Activated CD4-positive, alpha-beta T cell treated with anti-CD3 and anti-CD28 coated beads for 36 hours (primary cell): ENCODE measurements at regions of chr10 and their contacts with region 1.

Region 1: DNA sequence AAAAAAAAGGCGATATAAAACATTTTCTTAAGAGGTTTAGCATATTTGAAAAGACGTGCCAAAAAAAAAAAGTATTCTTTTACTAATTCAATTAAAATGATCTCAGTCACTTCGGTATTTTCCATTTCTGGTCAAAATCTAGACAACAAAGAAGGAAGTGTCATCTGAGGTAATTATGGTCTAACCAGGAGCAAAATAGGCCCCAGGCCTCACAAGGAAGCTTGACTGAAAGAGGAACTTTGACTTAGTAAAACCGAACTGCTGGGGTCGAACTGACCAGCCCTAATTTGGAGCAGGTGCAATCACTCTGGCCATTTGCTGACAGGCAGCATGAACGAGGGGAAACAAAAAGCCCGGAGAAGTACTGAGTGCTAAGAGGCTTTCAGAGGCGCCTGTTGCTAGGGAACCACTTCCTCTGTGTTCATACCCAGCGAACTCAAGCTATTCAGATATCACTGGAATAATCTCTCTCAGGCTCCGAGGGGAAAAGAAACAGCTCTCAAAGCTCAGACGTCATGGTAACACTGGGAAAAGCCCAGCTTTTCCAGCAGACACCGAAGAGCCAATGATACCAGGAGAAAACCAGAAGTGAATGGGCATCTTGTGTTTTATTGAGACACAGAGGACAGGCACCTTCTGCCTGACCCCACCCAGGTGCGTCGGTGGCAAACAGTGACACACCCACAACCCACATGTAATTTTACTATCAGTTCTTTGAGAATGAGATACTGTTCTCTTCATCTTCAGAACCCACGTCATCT is 126.5 kb downstream of the FAM107B start:
- DNase-seq: peak; percentile 79
- ATAC-seq: peak; percentile 66
- H3K4me3 Mint-ChIP-seq: peak overlapping the region; percentile 65
- H3K27ac Mint-ChIP-seq: peak overlapping the region; percentile 98
- H3K4me1 Mint-ChIP-seq: peaks cover 85% of the 10 kb centered on the region
- H3K27me3 Mint-ChIP-seq: no peaks in the 10 kb centered on the region

Region 2: GRCh38 chr10:14486777-14487487 is 161.3 kb before region 1 on chr10:
- CTCF ChIA-PET with region 1: no interaction called
- POLR2A ChIA-PET with region 1: no interaction called
- intact Hi-C with region 1: no loop called
- DNase-seq: no peak
- ATAC-seq: no peak
- H3K4me3 Mint-ChIP-seq: no peak overlapping the region
- H3K27ac Mint-ChIP-seq: no peak overlapping the region
- H3K4me1 Mint-ChIP-seq: peaks cover 2% of the 10 kb centered on the region
- H3K27me3 Mint-ChIP-seq: peaks cover 19% of the 10 kb centered on the region

Region 3: DNA sequence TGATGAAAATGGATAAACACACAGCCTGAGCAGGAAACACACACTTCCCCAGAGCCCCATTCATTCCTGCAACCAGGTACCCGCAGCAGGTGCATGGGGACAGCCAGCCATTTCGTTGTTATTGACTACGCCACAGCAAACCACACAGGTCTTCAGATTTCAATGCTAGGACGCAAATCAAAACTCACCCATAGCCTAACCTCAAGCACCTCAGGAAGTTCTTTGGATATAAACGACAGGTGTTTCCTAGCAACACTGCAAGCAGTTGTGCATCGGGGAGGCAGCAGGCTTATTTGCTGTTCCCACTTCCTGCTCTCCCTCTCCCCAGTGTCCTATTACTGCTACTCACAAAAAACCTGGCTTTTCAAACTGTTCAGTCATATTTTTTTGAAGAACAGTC is 141.0 kb before region 1 on chr10:
- CTCF ChIA-PET with region 1: no interaction called
- POLR2A ChIA-PET with region 1: no interaction called
- intact Hi-C with region 1: loop called in 1 of 2 experiments (anchors 5 kb)
- DNase-seq: peak; percentile 58
- ATAC-seq: peak; percentile 50
- H3K4me3 Mint-ChIP-seq: peak overlapping the region; percentile 30
- H3K27ac Mint-ChIP-seq: peak overlapping the region; percentile 72
- H3K4me1 Mint-ChIP-seq: peaks cover 43% of the 10 kb centered on the region
- H3K27me3 Mint-ChIP-seq: no peaks in the 10 kb centered on the region

Region 4: DNA sequence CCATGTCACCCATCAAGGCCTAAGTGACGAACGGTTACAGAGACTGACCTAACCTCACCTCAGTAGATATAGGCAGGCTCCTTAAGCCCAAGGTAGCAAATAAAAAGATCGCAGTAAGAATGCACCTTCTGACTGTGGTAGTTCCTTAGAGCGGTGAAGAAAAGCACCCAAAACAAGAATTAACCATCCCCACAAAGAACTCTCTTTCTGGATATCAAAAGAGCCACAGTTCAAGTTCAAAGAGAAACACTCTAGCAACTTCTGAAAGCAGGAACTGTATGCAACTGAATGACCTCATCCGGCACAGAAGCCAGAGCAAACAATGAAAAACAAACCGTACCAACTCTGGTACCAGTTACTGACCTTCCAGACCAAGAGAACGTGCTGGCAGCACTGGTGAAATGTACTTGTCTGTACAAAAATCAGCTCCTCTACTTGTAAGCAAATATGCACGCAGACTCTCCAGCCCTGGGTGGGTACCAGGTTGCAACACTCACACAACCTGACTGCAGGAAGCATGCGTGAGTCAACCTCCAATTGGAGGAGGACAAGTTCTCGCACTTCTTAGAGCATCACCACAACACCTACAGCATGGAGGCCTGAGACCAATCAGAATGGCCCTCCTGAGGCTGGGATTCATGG is 76.2 kb before region 1 on chr10:
- CTCF ChIA-PET with region 1: interaction called, 6 read pairs
- POLR2A ChIA-PET with region 1: interaction called, 10 read pairs
- intact Hi-C with region 1: no loop called
- DNase-seq: peak; percentile 78
- ATAC-seq: peak; percentile 88
- H3K4me3 Mint-ChIP-seq: peak overlapping the region; percentile 66
- H3K27ac Mint-ChIP-seq: peak overlapping the region; percentile 93
- H3K4me1 Mint-ChIP-seq: peaks cover 93% of the 10 kb centered on the region
- H3K27me3 Mint-ChIP-seq: no peaks in the 10 kb centered on the region

Region 5: DNA sequence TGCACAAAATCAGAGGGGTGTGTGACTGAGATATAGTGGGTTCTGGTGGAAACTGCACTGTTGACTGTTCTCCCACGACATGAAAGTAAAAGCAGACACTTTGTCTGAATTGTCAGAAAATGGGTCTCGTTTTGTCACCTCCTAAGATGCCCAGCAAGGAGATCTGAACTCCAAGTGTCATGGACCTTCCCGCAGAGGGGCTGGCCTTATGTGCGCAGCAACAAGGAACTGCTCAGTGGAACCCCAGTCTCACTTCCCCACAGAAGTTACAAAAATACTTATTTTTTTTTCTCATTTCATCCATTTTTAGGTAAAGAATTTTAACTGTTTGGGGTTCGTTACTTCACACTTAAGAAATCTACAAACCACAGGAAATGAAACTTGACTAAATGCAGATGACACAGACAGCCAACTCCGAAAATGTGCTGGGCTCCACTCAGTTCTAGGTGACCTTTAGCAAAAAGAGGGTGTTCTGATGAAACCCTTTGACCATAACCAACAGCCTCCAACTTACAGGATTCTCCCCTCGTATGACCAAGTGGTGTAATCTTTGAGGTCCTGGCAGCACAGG is 11.5 kb after region 1 on chr10:
- CTCF ChIA-PET with region 1: interaction called, 4 read pairs
- POLR2A ChIA-PET with region 1: interaction called, 5 read pairs
- intact Hi-C with region 1: loop called (anchors 1 kb)
- DNase-seq: peak; percentile 71
- ATAC-seq: peak; percentile 80
- H3K4me3 Mint-ChIP-seq: peak overlapping the region; percentile 60
- H3K27ac Mint-ChIP-seq: peak overlapping the region; percentile 92
- H3K4me1 Mint-ChIP-seq: peaks cover 82% of the 10 kb centered on the region
- H3K27me3 Mint-ChIP-seq: no peaks in the 10 kb centered on the region

Region 6: GRCh38 chr10:14812271-14812670 is 164.1 kb after region 1 on chr10:
- CTCF ChIA-PET with region 1: no interaction called
- POLR2A ChIA-PET with region 1: no interaction called
- intact Hi-C with region 1: loop called in 1 of 2 experiments (anchors 5 kb)
- DNase-seq: no peak
- ATAC-seq: peak; percentile 59
- H3K4me3 Mint-ChIP-seq: peak overlapping the region; percentile 23
- H3K27ac Mint-ChIP-seq: no peak overlapping the region
- H3K4me1 Mint-ChIP-seq: peaks cover 25% of the 10 kb centered on the region
- H3K27me3 Mint-ChIP-seq: no peaks in the 10 kb centered on the region

Region 7: DNA sequence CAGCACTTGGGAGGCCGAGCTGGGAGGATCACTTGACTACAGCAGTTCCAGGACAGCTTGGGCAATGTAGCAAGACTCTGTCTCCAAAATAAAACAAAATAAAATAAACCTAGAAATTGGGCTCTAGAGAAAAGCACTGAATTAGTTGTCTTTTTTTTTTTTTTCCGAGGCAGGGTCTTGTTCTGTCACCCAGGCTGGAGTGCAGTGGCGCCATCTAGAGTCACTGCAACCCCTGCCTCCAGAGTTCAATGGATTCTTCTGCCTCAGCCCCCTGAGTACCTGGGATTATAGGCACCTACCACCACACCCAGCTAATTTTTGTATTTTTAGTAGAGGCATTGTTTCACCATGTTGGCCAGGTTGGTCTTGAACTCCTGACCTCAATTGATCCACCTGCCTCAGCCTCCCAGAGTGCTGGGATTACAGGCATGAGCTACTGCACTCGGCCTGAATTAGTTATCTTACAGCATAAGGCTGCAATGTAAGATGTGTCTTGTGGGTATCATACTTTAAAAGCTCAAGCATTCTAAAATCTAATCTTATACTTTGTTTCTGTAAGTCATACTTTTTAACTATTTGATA is 323.8 kb after region 1 on chr10:
- CTCF ChIA-PET with region 1: no interaction called
- POLR2A ChIA-PET with region 1: no interaction called
- intact Hi-C with region 1: no loop called
- DNase-seq: peak; percentile 71
- ATAC-seq: peak; percentile 49
- H3K4me3 Mint-ChIP-seq: no peak overlapping the region
- H3K27ac Mint-ChIP-seq: no peak overlapping the region
- H3K4me1 Mint-ChIP-seq: no peaks in the 10 kb centered on the region
- H3K27me3 Mint-ChIP-seq: peaks cover 16% of the 10 kb centered on the region

Region 8: DNA sequence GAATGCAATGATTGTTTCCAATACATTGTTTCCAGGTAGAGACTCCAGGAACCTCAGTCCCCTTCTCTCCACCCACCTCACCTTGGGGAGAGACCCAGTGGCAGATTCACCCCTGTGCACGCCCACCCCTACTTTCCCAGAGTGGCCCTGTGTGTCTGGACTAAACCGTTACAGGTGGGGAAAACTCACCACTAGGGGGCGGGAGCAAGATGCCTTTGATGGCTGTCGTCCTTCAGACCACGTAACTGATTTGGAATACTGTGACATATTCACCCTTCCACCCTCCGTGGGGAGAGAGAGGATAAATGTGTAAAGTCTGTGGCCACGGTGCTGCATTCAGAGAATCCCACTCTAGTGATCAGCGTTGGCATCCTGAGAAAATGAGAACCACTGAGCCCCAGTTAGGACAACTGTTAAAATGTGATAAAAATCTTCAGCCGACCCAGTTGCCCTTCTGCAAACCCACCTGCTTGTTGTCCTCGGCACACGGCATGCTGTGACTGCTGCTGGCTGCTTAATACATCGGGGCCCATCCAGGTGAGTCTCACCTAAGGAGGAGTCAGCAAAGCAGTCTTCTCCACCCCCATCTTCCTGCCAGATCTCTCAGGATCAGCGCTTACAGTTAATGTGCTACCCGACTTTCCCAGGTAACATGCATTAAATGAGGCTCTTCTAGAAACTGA is 561.8 kb after region 1 on chr10:
- CTCF ChIA-PET with region 1: no interaction called
- POLR2A ChIA-PET with region 1: no interaction called
- intact Hi-C with region 1: no loop called
- DNase-seq: peak; percentile 91
- ATAC-seq: peak; percentile 66
- H3K4me3 Mint-ChIP-seq: no peak overlapping the region
- H3K27ac Mint-ChIP-seq: no peak overlapping the region
- H3K4me1 Mint-ChIP-seq: peaks cover 51% of the 10 kb centered on the region
- H3K27me3 Mint-ChIP-seq: no peaks in the 10 kb centered on the region